Naive thymus-derived CD4-positive, alpha-beta T cell (primary cell): ENCODE measurements at regions of chr20 and their contacts with region 1.

Region 1: DNA sequence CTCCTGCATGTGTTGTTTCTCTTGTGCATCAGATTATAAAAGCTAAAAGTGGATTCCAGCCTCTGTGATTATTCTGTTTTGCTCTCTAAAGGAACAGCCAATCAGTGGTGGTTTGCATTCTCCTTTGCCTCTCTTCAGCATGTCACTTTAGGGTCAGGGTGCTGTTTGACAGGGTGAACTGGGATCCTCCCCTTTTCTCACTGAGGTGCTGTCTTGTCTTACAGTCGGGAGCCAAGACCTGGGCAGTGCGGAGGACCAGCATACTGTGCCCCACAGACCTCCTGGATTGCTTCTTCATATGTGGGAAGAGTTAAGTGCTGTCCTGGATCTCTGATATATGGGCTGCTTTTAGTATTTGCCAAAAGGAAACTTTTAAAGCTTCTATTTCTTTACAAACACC is 15.2 kb upstream of the CST2 start:
- DNase-seq: no peak
- ATAC-seq: no peak
- H3K4me3 ChIP-seq: no peak overlapping the region
- H3K4me3 Mint-ChIP-seq: no peak overlapping the region
- H3K27ac ChIP-seq: no peak overlapping the region
- H3K27ac Mint-ChIP-seq: no peak overlapping the region
- H3K4me1 ChIP-seq: no peaks in the 10 kb centered on the region
- H3K4me1 Mint-ChIP-seq: no peaks in the 10 kb centered on the region
- H3K27me3 ChIP-seq: no peaks in the 10 kb centered on the region
- H3K27me3 Mint-ChIP-seq: peaks cover 3 to 25% (median 11%) of the 10 kb centered on the region in 5 donors

Region 2: DNA sequence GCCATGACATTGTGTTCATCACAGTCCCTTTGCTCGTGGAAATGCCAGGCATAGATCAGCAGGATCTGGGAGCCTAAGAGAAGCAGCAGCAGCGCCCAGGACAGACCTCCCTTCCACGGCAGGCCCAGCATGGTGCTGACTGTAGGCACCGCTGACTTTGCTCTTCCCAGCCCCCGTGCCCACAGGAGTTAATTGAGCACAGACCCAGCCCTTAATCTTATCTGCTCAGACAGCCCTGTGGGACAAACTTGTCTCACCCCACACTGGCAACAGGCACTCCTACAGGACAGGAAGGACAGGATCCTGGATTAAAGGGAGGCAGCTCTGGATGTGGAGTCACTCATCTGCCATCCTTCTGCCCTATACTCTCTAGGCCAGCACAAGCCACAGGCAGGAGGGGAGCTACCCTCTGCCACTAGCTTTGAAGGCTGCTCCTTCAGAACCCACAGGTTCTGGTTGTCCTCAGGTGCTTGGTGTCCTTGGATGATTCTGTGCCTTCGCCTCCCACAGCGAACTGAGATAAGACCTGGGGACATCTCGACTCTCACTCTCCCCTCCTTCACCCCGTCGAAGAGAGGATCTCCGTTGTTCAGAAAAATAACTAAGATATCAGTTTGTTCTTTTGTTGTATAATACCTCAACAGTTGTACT is 273.2 kb before region 1 on chr20 and contains the start of gene CST9L:
- CTCF ChIA-PET with region 1: no interaction called
- POLR2A ChIA-PET with region 1: no interaction called
- intact Hi-C with region 1: no loop called
- DNase-seq: no peak
- ATAC-seq: no peak
- H3K4me3 ChIP-seq: no peak within 1 kb of the TSS
- H3K4me3 Mint-ChIP-seq: no peak within 1 kb of the TSS
- H3K27ac ChIP-seq: no peak within 1 kb of the TSS
- H3K27ac Mint-ChIP-seq: no peak within 1 kb of the TSS
- H3K4me1 ChIP-seq: no peaks in the 10 kb centered on the region
- H3K4me1 Mint-ChIP-seq: peaks cover 0 to 1% (median 0%) of the 10 kb centered on the region in 7 donors
- H3K27me3 ChIP-seq: no peaks in the 10 kb centered on the region
- H3K27me3 Mint-ChIP-seq: peaks cover 5 to 31% (median 16%) of the 10 kb centered on the region in 5 donors
- total RNA-seq, gene CST9L: not detected

Region 3: GRCh38 chr20:23641936-23642751 is 199.5 kb before region 1 on chr20:
- CTCF ChIA-PET with region 1: no interaction called
- POLR2A ChIA-PET with region 1: no interaction called
- intact Hi-C with region 1: no loop called
- DNase-seq: no peak
- ATAC-seq: peak; percentile 62
- H3K4me3 ChIP-seq: no peak overlapping the region
- H3K4me3 Mint-ChIP-seq: no peak overlapping the region
- H3K27ac ChIP-seq: no peak overlapping the region
- H3K27ac Mint-ChIP-seq: no peak overlapping the region
- H3K4me1 ChIP-seq: no peaks in the 10 kb centered on the region
- H3K4me1 Mint-ChIP-seq: peaks cover 0 to 12% (median under 1%) of the 10 kb centered on the region in 7 donors
- H3K27me3 ChIP-seq: no peaks in the 10 kb centered on the region
- H3K27me3 Mint-ChIP-seq: peaks cover 0 to 24% (median 6%) of the 10 kb centered on the region in 5 donors

Region 4: GRCh38 chr20:23773127-23773526 is 68.6 kb before region 1 on chr20:
- CTCF ChIA-PET with region 1: no interaction called
- POLR2A ChIA-PET with region 1: no interaction called
- intact Hi-C with region 1: no loop called
- DNase-seq: no peak
- ATAC-seq: no peak
- H3K4me3 ChIP-seq: no peak overlapping the region
- H3K4me3 Mint-ChIP-seq: no peak overlapping the region
- H3K27ac ChIP-seq: no peak overlapping the region
- H3K27ac Mint-ChIP-seq: no peak overlapping the region
- H3K4me1 ChIP-seq: no peaks in the 10 kb centered on the region
- H3K4me1 Mint-ChIP-seq: no peaks in the 10 kb centered on the region
- H3K27me3 ChIP-seq: peaks cover 0 to 3% of the 10 kb centered on the region in 2 donors
- H3K27me3 Mint-ChIP-seq: peaks cover 0 to 42% (median 21%) of the 10 kb centered on the region in 5 donors

Region 5: GRCh38 chr20:23910210-23910609 is 68.5 kb after region 1 on chr20:
- CTCF ChIA-PET with region 1: no interaction called
- POLR2A ChIA-PET with region 1: no interaction called
- intact Hi-C with region 1: no loop called
- DNase-seq: no peak
- ATAC-seq: no peak
- H3K4me3 ChIP-seq: no peak overlapping the region
- H3K4me3 Mint-ChIP-seq: no peak overlapping the region
- H3K27ac ChIP-seq: no peak overlapping the region
- H3K27ac Mint-ChIP-seq: no peak overlapping the region
- H3K4me1 ChIP-seq: no peaks in the 10 kb centered on the region
- H3K4me1 Mint-ChIP-seq: peaks cover 0 to 27% (median 4%) of the 10 kb centered on the region in 7 donors
- H3K27me3 ChIP-seq: no peaks in the 10 kb centered on the region
- H3K27me3 Mint-ChIP-seq: peaks cover 0 to 20% (median 17%) of the 10 kb centered on the region in 5 donors

Region 6: GRCh38 chr20:24350923-24351368 is 509.3 kb after region 1 on chr20:
- CTCF ChIA-PET with region 1: no interaction called
- POLR2A ChIA-PET with region 1: no interaction called
- intact Hi-C with region 1: loop called in 1 of 2 experiments (anchors 5 kb)
- DNase-seq: no peak
- ATAC-seq: no peak
- H3K4me3 ChIP-seq: no peak overlapping the region
- H3K4me3 Mint-ChIP-seq: no peak overlapping the region
- H3K27ac ChIP-seq: no peak overlapping the region
- H3K27ac Mint-ChIP-seq: no peak overlapping the region
- H3K4me1 ChIP-seq: no peaks in the 10 kb centered on the region
- H3K4me1 Mint-ChIP-seq: no peaks in the 10 kb centered on the region
- H3K27me3 ChIP-seq: no peaks in the 10 kb centered on the region
- H3K27me3 Mint-ChIP-seq: no peaks in the 10 kb centered on the region